ENCODE measurements at regions of chr6 and their contacts with region 1.

Region 1: DNA sequence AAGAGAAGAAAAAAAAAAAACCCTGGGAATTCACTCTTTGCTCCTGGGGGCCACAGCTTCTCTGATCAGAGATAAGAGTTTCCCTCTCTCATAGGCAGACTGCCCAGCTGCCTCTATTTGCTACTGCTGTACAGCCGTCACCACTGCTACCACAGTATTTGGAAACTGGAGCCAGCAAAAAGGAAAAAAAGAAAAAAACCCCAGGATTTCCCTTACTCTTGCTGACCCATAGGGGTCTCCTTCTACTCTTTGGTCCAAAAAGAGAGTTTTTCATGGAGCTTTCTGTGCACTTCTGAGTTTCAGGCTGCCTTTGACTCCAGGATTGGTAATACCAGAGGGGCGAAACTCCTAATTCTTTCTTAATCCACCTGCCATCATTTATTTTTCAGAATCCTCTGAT is 89.7 kb downstream of the MDGA1 start:
- H3K4me3 ChIP-seq: no peak overlapping the region
- H3K27ac ChIP-seq: no peak overlapping the region
- H3K4me1 ChIP-seq: no peaks in the 10 kb centered on the region
- CTCF ChIP-seq: no peak

Region 2: DNA sequence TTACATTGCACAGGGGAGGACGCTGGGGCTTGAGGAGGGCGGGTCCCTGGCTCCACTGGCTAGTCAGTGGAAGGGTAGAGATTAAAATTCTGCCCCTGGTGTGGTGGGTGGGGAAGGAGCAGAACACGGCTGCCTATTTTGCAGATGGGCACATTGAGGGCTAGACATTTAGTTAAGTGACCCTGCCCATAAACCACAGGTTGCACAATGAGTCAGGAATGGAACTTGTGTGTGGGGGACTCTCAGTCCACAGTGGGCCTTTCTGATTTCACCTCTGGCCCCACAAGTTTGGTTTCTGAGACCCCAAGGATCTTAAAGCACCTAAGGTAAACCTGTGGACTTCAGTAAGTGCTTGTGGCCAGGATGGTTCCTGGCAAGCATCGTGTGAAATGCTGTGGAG is 86.3 kb before region 1 on chr6:
- CTCF ChIA-PET with region 1: no interaction called
- POLR2A ChIA-PET with region 1: no interaction called
- H3K4me3 ChIP-seq: no peak overlapping the region
- H3K27ac ChIP-seq: no peak overlapping the region
- H3K4me1 ChIP-seq: 0 out of 2 replicates have a peak, but pooled peaks cover under 1% of the 10 kb centered on the region
- CTCF ChIP-seq: no peak

Region 3: GRCh38 chr6:37624121-37624985 is 16.4 kb after region 1 on chr6:
- CTCF ChIA-PET with region 1: interaction called, 16 read pairs
- POLR2A ChIA-PET with region 1: no interaction called
- H3K4me3 ChIP-seq: no peak overlapping the region; the same call in none of the 2 replicates
- H3K27ac ChIP-seq: no peak overlapping the region
- H3K4me1 ChIP-seq: peaks cover 10% of the 10 kb centered on the region
- CTCF ChIP-seq: no peak

Region 4: GRCh38 chr6:37653933-37654565 is 46.1 kb after region 1 on chr6:
- CTCF ChIA-PET with region 1: interaction called, 10 read pairs
- POLR2A ChIA-PET with region 1: no interaction called
- H3K4me3 ChIP-seq: no peak overlapping the region
- H3K27ac ChIP-seq: no peak overlapping the region
- H3K4me1 ChIP-seq: no peaks in the 10 kb centered on the region
- CTCF ChIP-seq: peak; percentile 40; the same call in 1 of the 2 replicates

Region 5: GRCh38 chr6:37667050-37667814 is 59.3 kb after region 1 on chr6:
- CTCF ChIA-PET with region 1: no interaction called
- POLR2A ChIA-PET with region 1: no interaction called
- H3K4me3 ChIP-seq: no peak overlapping the region
- H3K27ac ChIP-seq: no peak overlapping the region
- H3K4me1 ChIP-seq: peaks cover 10% of the 10 kb centered on the region
- CTCF ChIP-seq: no peak